Activated CD4-positive, alpha-beta T cell treated with anti-CD3 and anti-CD28 coated beads for 36 hours (primary cell): ENCODE measurements at regions of chr7 and their contacts with region 1.

Region 1: DNA sequence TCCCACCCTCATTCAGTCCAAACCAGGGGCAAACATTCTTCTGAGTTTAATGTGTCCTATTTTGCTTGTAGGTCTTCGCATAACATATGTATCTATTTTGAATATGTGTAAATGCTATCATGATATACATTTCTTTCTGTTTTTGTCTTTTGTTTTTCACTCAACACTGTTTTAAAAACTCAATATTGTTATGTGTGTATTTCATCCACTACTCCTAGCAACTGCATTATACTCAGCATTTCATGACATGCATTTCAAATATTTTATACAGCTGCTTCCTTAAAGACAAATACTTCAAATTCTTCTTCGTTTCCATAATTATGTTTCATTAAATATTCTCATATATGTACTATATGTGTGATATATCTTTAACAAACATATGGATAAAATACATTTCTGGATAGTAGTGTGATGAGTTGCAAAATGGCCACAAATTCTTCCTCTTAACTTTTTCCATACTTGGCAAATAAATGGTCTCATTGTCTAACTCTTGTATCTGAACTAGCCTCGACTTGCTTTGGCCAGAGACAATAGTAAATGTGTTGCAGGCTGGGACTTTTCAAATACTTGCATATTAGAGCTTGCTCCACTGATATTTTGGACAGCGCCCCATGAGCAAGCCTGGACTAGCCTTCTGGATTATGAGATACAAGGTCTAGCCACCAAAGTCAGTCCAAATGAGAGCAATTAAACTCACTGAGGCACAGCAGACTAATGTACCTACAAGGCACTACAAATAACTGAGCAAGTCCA is 539.7 kb upstream of the KCND2 start:
- DNase-seq: no peak
- ATAC-seq: no peak
- H3K4me3 Mint-ChIP-seq: no peak overlapping the region
- H3K27ac Mint-ChIP-seq: no peak overlapping the region
- H3K4me1 Mint-ChIP-seq: no peaks in the 10 kb centered on the region
- H3K27me3 Mint-ChIP-seq: no peaks in the 10 kb centered on the region

Region 2: DNA sequence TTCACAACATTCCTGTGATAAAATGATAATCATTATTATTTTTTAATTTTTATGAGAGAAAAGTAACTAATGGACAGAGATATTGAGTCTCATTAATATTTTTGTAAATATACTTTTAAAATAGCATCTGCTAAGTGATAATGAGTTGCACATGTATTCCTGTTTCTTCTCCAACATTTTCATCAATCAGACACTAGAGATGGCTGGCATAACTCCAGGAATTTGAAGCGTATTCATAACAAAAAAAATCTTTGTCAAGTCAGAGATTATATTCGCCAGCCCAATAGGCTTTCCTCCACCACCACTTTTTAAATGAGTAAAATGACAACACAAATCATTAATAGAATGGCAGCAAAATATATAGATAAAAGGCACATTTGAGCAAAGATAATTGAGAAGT is 15.7 kb after region 1 on chr7:
- CTCF ChIA-PET with region 1: no interaction called
- POLR2A ChIA-PET with region 1: no interaction called
- intact Hi-C with region 1: loop called (anchors 1 kb)
- DNase-seq: no peak
- ATAC-seq: no peak
- H3K4me3 Mint-ChIP-seq: no peak overlapping the region
- H3K27ac Mint-ChIP-seq: no peak overlapping the region
- H3K4me1 Mint-ChIP-seq: no peaks in the 10 kb centered on the region
- H3K27me3 Mint-ChIP-seq: no peaks in the 10 kb centered on the region